Dorsolateral prefrontal cortex (tissue), 120 donors: ENCODE measurements at regions of chr1 and their contacts with region 1.

Region 1: DNA sequence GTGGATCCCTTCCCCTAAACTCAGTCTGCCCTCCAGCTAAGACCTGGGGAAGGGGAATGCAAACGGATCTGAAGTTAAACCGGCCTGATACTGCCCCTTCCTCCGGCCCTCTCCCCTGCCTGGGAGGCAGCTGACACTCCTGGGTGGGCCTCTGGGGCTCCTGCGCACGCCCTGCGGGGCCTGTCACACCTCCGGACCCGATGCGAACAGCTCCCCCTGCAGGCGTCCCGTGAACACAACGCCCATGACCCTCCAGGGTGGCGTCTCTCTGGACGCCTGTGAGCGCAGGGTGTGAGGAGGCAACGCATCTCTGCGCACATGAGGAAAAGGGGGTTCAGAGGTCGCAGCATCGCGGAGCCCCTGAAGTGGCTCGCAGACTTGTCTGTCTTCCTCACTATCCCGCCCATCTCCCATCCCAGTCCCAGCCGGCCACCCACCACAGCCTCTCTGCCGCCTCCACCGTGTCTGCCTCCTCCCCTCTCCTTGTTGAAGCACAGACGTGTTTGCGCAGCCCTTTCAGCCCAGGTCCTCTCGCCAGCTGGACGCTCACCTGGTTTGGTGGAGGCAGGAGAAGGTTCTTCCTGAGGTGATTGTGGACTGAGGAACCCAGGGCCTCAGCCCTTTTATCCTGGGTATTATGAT is 421 bp upstream of the LCE3A start:
- DNase-seq: no peak
- H3K4me3 ChIP-seq: no peak overlapping the region
- H3K27ac ChIP-seq: no peak overlapping the region
- H3K27me3 ChIP-seq: peaks cover 0 to 42% (median 14%) of the 10 kb centered on the region in 45 donors
- CTCF ChIP-seq: peak in 2 of 56 donors; percentile 7 to 13

Region 2: DNA sequence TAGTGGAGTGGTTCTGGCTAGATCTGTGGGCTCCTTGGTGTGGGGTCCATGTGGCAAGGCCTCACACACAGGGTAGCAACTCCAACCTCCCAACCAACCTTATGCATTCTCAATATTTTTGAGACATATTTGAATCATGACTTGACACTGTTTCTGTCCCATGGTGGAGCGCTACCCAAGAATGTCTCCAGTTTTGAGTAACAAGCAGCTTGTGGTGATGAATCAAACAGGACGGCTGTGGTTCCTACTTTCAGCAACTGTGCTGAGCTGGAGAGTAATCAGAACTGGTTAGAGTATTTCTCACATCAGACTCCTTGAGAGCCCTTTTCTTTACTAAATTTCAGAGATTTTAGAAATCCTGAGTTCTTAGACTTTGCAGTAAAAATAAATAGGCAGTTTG is 46.2 kb before region 1 on chr1:
- intact Hi-C with region 1: loop called in 1 of 2 experiments (anchors 2 kb)
- DNase-seq: no peak
- H3K4me3 ChIP-seq: no peak overlapping the region
- H3K27ac ChIP-seq: no peak overlapping the region
- H3K27me3 ChIP-seq: peaks cover 0 to 36% (median 5%) of the 10 kb centered on the region in 45 donors
- CTCF ChIP-seq: no peak